ENCODE measurements at regions of chr17 and their contacts with region 1.

Region 1: DNA sequence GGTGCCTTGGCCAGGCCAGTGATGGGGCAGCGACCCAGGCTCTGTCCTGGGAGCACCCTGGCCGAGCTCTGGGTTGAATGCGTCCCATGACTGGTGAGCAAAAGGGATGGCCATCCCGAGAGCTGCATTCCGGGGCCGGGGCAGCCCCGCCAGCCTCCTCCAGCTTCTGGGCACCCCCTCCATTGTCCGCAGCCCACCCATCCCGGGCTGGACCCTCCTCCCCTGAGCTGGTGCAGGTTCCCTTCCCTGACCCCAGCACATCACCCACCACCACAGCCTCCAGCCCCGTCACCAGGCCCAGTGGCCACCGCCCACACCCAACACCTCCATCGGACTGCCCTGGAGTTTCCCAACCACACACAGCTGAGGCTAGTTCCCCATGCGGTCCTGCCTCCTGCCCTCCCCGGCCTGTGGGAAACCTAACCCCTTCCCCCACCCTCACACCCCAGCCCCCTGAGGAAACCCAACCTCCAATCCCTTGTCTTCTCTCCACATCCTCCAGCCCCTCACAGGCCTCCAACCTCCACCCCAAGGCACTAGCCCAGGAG is 16.2 kb upstream of the PVALEF start:
- DNase-seq: no peak
- H3K4me3 ChIP-seq: no peak overlapping the region
- H3K27ac ChIP-seq: no peak overlapping the region
- H3K4me1 ChIP-seq: no peaks in the 10 kb centered on the region
- H3K27me3 ChIP-seq: no peaks in the 10 kb centered on the region
- CTCF ChIP-seq: no peak
- POLR2A ChIP-seq: no peak

Region 2: GRCh38 chr17:81094509-81095382 is 54.3 kb before region 1 on chr17:
- intact Hi-C with region 1: no loop called
- DNase-seq: peak; percentile 78 to 82
- H3K4me3 ChIP-seq: peak overlapping the region in 1 of 3 donors; percentile 41
- H3K27ac ChIP-seq: peak overlapping the region; percentile 81 to 94
- H3K4me1 ChIP-seq: peaks cover 12 to 25% of the 10 kb centered on the region in 2 donors
- H3K27me3 ChIP-seq: no peaks in the 10 kb centered on the region
- CTCF ChIP-seq: peak in 1 of 3 donors; percentile 30
- POLR2A ChIP-seq: no peak

Region 3: DNA sequence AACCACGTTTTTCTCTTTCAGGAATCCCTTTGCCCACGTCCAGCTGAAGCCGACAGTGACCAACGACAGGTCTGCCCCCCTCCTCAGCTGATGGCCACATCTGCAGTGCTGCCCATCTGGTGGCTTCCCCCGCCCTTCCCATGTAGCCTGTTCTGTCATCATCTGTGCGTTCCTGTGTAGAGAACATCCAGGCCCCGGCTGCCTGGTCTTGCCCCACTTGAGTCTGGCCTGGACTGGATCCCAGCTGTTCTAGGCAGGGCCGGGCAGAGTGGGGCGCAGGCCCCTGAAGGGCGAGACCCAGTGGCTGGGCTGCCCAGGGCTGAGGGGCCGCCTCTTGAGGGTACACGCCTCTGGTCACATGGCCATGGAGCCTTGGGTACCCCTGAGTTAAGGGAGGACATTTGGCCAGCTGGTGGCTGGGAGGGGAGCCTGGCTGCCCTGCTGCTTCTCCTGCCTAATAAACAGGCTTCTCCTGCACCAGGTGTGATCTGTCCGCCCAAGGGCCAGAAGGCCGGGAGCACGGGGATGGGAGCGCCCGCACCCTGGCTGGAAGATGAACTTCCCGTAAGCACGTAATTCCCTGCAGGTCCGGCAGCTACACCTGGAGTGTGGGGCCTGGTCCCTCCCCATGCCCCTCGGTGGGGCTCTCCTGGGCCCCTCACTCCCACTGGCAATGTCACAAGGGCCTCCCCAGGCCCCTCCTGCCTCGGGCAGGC is 33.2 kb before region 1 on chr17:
- intact Hi-C with region 1: loop called (anchors 1 kb)
- DNase-seq: no peak
- H3K4me3 ChIP-seq: no peak overlapping the region
- H3K27ac ChIP-seq: no peak overlapping the region
- H3K4me1 ChIP-seq: peaks cover 0 to 4% of the 10 kb centered on the region in 2 donors
- H3K27me3 ChIP-seq: no peaks in the 10 kb centered on the region
- CTCF ChIP-seq: no peak
- POLR2A ChIP-seq: no peak

Region 4: GRCh38 chr17:81460856-81461460 is 311.9 kb after region 1 on chr17:
- intact Hi-C with region 1: no loop called
- DNase-seq: no peak
- H3K4me3 ChIP-seq: peak overlapping the region in 2 of 3 donors; percentile 11 to 18
- H3K27ac ChIP-seq: no peak overlapping the region
- H3K4me1 ChIP-seq: no peaks in the 10 kb centered on the region
- H3K27me3 ChIP-seq: no peaks in the 10 kb centered on the region
- CTCF ChIP-seq: no peak
- POLR2A ChIP-seq: no peak